Transverse colon (tissue), 4 donors: ENCODE measurements at regions of chr11 and their contacts with region 1.

Region 1: GRCh38 chr11:64204464-64204989 is 2.0 kb upstream of the FERMT3 start:
- DNase-seq: peak; percentile 93
- H3K4me3 ChIP-seq: no peak overlapping the region
- H3K27ac ChIP-seq: peak overlapping the region; percentile 73 to 85 (median 80)
- H3K4me1 ChIP-seq: peaks cover 7 to 38% (median 34%) of the 10 kb centered on the region in 4 donors
- H3K27me3 ChIP-seq: no peaks in the 10 kb centered on the region
- CTCF ChIP-seq: peak; percentile 64 to 84 (median 73)
- EP300 ChIP-seq: no peak
- POLR2A ChIP-seq: no peak

Region 2: GRCh38 chr11:64152841-64153691 is 51.5 kb before region 1 on chr11:
- in situ Hi-C with region 1: no loop called
- intact Hi-C with region 1: no loop called
- DNase-seq: peak; percentile 71
- H3K4me3 ChIP-seq: no peak overlapping the region
- H3K27ac ChIP-seq: no peak overlapping the region
- H3K4me1 ChIP-seq: peaks cover 4 to 15% (median 6%) of the 10 kb centered on the region in 4 donors
- H3K27me3 ChIP-seq: no peaks in the 10 kb centered on the region
- CTCF ChIP-seq: peak; percentile 94 to 100 (median 100)
- EP300 ChIP-seq: no peak
- POLR2A ChIP-seq: no peak

Region 3: DNA sequence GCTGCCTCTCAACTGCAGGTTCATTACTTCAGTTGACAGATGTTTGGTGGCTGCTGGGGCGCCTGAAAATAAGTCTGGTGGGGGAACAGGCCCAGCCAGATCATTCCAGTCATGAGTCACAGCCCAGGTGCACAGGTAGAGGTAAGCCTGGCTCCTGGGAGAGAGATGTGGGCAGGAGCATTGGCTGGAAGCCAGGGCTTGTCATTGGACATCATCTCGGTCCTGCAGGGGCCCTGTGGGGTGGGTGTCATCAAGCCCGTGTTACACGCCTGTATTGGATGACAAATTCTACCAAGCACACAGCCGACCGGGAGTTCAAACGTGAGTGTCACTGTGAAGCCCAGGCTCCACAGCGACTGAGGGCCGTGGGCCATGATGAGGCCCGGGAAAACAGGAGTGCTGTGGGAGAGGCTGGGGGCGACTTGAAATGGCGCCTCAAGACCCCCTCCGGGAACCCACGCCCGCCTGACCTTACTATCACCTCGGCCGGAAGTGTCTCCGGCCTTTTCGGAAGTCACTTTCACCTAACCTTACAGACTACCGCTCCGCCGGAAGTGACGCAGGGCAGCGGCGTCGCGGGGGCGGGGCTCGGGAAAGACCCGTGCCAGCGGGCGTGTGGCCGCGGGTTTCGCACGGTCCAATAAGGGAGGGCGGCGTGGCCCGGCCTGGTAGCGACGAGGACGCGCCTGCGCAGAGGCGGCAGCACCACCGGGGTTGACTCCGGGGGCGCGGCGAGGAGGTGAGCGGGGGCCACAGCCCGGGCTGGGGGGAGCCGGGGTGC is 36.1 kb after region 1 on chr11 and contains the start of gene FKBP2:
- in situ Hi-C with region 1: no loop called
- intact Hi-C with region 1: no loop called
- DNase-seq: peak; percentile 98
- H3K4me3 ChIP-seq: peak within 1 kb of the TSS; percentile 65 to 96 (median 82)
- H3K27ac ChIP-seq: peak within 1 kb of the TSS; percentile 96 to 100 (median 98)
- H3K4me1 ChIP-seq: peaks cover 33 to 75% (median 59%) of the 10 kb centered on the region in 4 donors
- H3K27me3 ChIP-seq: no peaks in the 10 kb centered on the region
- CTCF ChIP-seq: no peak
- EP300 ChIP-seq: peak; percentile 43
- POLR2A ChIP-seq: peak; percentile 97
- total RNA-seq, gene FKBP2: 63.6 to 203 (median 102) TPM

Region 4: GRCh38 chr11:64298966-64299846 is 94.7 kb after region 1 on chr11:
- in situ Hi-C with region 1: loop called (anchors 5 to 10 kb)
- intact Hi-C with region 1: no loop called
- DNase-seq: peak; percentile 57
- H3K4me3 ChIP-seq: peak overlapping the region in 3 of 4 donors; percentile 21 to 50 (median 37)
- H3K27ac ChIP-seq: no peak overlapping the region
- H3K4me1 ChIP-seq: peaks cover 18 to 28% (median 27%) of the 10 kb centered on the region in 4 donors
- H3K27me3 ChIP-seq: peaks cover 73% of the 10 kb centered on the region
- CTCF ChIP-seq: peak in 1 of 5 experiments; percentile 11
- EP300 ChIP-seq: no peak
- POLR2A ChIP-seq: no peak

Region 5: GRCh38 chr11:64304316-64305072 is 100.0 kb after region 1 on chr11:
- in situ Hi-C with region 1: loop called (anchors 5 to 10 kb)
- intact Hi-C with region 1: no loop called
- DNase-seq: peak; percentile 97
- H3K4me3 ChIP-seq: peak overlapping the region; percentile 32 to 81 (median 62)
- H3K27ac ChIP-seq: peak overlapping the region; percentile 90 to 99 (median 98)
- H3K4me1 ChIP-seq: peaks cover 18 to 45% (median 40%) of the 10 kb centered on the region in 4 donors
- H3K27me3 ChIP-seq: peaks cover 21% of the 10 kb centered on the region
- CTCF ChIP-seq: peak; percentile 86 to 98 (median 90)
- EP300 ChIP-seq: no peak
- POLR2A ChIP-seq: peak; percentile 69